Lower lobe of right lung (tissue), 2 donors: ENCODE measurements at regions of chr2 and their contacts with region 1.

Region 1: GRCh38 chr2:69714024-69714423 is 27.9 kb upstream of the ANXA4 start:
- DNase-seq: no peak
- ATAC-seq: peak in 1 of 2 donors; percentile 17
- H3K4me3 ChIP-seq: no peak overlapping the region
- H3K27ac ChIP-seq: no peak overlapping the region
- H3K4me1 ChIP-seq: peaks cover 8% of the 10 kb centered on the region
- H3K27me3 ChIP-seq: no peaks in the 10 kb centered on the region
- CTCF ChIP-seq: no peak

Region 2: DNA sequence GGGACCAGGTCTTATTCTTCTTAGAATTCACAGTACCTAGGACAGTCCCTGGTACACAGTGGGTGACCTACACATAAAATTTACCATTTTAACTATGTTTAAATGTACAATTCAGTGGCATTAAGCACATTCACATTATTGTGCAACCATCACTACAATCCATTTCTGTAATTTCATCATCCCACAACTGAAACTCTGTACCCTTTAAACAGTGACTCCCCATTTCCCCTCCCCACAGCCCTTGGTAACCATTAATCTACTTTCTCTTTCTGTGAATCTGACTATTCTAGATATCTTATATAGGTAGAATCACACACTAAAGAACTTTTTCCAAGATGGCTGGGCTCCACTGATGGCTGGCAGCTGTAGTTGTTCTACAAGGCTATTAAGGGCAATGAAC is 368.6 kb before region 1 on chr2:
- intact Hi-C with region 1: no loop called
- DNase-seq: no peak
- ATAC-seq: no peak
- H3K4me3 ChIP-seq: no peak overlapping the region
- H3K27ac ChIP-seq: no peak overlapping the region
- H3K4me1 ChIP-seq: no peaks in the 10 kb centered on the region
- H3K27me3 ChIP-seq: no peaks in the 10 kb centered on the region
- CTCF ChIP-seq: no peak

Region 3: GRCh38 chr2:69525261-69525660 is 188.8 kb before region 1 on chr2:
- intact Hi-C with region 1: no loop called
- DNase-seq: no peak
- ATAC-seq: no peak
- H3K4me3 ChIP-seq: no peak overlapping the region
- H3K27ac ChIP-seq: no peak overlapping the region
- H3K4me1 ChIP-seq: no peaks in the 10 kb centered on the region
- H3K27me3 ChIP-seq: no peaks in the 10 kb centered on the region
- CTCF ChIP-seq: no peak

Region 4: DNA sequence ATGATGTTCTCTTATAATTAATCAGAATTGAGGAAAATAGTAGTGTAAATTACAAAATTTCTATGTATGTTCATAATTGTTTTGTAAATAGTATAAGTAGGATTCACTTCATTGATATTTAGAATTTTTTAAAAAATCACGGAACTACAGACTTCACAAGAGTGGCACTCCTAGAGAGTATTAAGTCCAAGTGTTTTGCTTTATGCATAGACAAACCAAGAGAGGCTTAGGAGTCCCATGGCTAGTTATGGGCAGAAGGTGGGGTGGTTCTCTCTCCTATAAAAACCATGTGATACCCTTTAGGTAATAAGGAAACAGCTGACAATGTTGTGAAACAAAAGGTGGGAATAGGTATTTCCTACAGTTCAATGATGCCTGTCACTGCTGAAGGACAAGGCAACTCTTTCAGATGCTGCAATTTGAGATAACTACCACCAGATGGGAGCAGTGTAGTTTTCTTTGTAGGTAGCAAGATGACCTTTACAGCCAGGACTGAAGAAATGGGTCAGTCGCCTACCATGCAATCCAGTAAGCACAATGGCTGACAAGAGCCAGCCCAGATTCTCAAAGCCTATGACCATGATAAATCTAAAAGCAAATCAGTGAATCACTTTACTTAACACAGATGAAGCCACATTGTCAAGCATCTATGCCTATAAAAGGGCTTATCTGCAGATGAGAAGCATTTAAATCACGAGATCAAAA is 154.4 kb before region 1 on chr2:
- intact Hi-C with region 1: loop called (anchors 5 kb)
- DNase-seq: no peak
- ATAC-seq: peak; percentile 84 to 85
- H3K4me3 ChIP-seq: no peak overlapping the region
- H3K27ac ChIP-seq: no peak overlapping the region
- H3K4me1 ChIP-seq: peaks cover 18% of the 10 kb centered on the region
- H3K27me3 ChIP-seq: no peaks in the 10 kb centered on the region
- CTCF ChIP-seq: peak; percentile 74

Region 5: DNA sequence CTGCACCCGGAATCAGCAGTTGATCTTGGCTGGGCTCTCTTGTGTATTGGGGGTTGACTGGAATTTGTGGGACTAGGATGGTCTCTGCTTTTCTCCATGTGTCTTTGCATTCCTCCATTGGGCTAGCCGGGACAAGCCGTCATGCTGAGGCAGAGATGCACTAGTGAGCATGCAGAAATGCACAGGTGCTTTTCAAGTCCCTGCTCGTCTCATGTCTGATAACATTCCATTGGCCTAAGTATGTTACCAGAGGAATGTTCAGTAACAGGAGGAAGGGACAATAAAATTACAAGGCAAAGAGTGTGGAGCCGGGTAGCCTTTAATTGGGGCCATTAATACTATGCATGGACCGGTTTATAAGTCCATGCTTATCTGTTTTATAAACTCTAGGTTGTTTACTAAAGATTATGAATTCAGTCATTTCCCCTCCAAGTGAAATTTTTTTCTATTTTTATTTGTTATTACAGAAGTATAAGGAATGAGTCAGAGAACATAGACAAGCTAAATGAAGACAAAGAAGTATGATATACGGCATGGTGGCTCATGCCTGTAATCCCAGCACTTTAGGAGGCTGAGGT is 46.1 kb before region 1 on chr2:
- intact Hi-C with region 1: no loop called
- DNase-seq: no peak
- ATAC-seq: peak in 1 of 2 donors; percentile 19
- H3K4me3 ChIP-seq: no peak overlapping the region
- H3K27ac ChIP-seq: no peak overlapping the region
- H3K4me1 ChIP-seq: no peaks in the 10 kb centered on the region
- H3K27me3 ChIP-seq: no peaks in the 10 kb centered on the region
- CTCF ChIP-seq: no peak